Activated CD4-positive, alpha-beta memory T cell treated with anti-CD3 and anti-CD28 coated beads for 36 hours (primary cell): ENCODE measurements at regions of chr2 and their contacts with region 1.

Region 1: DNA sequence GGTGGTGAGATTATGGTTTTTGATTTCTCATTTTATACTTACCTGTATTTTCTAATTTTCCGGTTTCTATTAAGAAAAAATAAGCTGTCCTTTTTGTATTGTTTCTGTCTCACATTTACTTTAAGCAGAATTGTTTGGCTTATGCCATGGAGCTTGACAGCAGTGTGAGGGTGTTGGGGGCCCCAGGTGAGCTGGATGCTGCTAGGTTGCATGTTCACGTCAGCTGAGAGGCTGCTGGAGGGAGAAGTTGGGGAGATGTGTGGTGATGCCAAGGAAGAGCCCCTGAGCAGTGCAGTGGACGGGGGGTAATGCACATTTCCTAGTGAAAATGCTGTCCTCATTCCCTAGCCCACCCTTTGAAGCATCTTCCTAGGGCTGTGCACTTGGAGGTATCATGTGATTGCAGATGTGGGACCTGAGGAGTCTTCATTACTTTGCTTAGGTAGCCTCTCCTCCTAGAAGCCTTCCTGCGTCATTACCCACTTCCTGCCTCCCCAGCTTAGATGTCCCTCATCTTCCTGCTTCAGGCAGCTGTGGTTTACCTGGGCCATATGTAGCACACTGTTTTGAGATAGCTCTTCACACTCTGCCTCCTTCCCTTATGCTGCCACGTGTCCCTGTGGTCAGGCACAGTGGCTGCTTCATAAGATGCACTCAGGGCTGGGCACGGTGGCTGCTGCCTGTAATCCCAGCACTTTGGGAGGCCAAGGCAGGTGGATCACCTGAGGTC is 16.2 kb downstream of the ATG16L1 start:
- DNase-seq: peak; percentile 88
- H3K4me3 Mint-ChIP-seq: peak overlapping the region; percentile 66
- H3K27ac Mint-ChIP-seq: peak overlapping the region; percentile 94
- H3K4me1 Mint-ChIP-seq: peaks cover 63% of the 10 kb centered on the region
- H3K27me3 Mint-ChIP-seq: no peaks in the 10 kb centered on the region

Region 2: GRCh38 chr2:232611551-232612218 is 656.0 kb before region 1 on chr2:
- CTCF ChIA-PET with region 1: no interaction called
- POLR2A ChIA-PET with region 1: no interaction called
- intact Hi-C with region 1: loop called (anchors 1 kb)
- DNase-seq: peak; percentile 79
- H3K4me3 Mint-ChIP-seq: no peak overlapping the region
- H3K27ac Mint-ChIP-seq: no peak overlapping the region
- H3K4me1 Mint-ChIP-seq: no peaks in the 10 kb centered on the region
- H3K27me3 Mint-ChIP-seq: no peaks in the 10 kb centered on the region

Region 3: DNA sequence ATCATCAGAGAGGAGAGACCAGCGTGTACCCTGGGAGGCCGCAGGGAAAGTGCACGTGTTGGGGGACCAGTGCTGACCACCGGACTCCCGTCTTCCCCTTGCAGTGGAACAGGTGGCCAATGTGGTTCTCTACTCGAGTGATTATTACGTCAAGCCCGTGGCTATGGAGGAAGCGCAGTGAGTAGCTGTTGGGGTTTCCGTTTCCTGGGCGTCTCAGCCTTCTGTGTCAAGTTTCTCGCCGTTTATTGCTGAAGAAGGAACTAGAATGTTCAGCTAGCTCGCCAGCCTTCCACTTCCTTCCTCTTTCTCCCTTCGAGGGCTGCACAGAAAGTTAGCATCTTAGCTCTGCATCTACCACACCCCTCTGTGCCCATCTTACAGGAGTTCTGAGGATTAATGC is 63.9 kb after region 1 on chr2:
- CTCF ChIA-PET with region 1: no interaction called
- POLR2A ChIA-PET with region 1: no interaction called
- intact Hi-C with region 1: loop called (anchors 5 kb)
- DNase-seq: peak; percentile 81
- H3K4me3 Mint-ChIP-seq: peak overlapping the region; percentile 1
- H3K27ac Mint-ChIP-seq: peak overlapping the region; percentile 88
- H3K4me1 Mint-ChIP-seq: peaks cover 31% of the 10 kb centered on the region
- H3K27me3 Mint-ChIP-seq: no peaks in the 10 kb centered on the region

Region 4: GRCh38 chr2:233418761-233419625 is 151.3 kb after region 1 on chr2:
- CTCF ChIA-PET with region 1: no interaction called
- POLR2A ChIA-PET with region 1: no interaction called
- intact Hi-C with region 1: loop called (anchors 5 kb)
- DNase-seq: peak; percentile 72
- H3K4me3 Mint-ChIP-seq: peak overlapping the region; percentile 63
- H3K27ac Mint-ChIP-seq: peak overlapping the region; percentile 85
- H3K4me1 Mint-ChIP-seq: peaks cover 92% of the 10 kb centered on the region
- H3K27me3 Mint-ChIP-seq: no peaks in the 10 kb centered on the region

Region 5: DNA sequence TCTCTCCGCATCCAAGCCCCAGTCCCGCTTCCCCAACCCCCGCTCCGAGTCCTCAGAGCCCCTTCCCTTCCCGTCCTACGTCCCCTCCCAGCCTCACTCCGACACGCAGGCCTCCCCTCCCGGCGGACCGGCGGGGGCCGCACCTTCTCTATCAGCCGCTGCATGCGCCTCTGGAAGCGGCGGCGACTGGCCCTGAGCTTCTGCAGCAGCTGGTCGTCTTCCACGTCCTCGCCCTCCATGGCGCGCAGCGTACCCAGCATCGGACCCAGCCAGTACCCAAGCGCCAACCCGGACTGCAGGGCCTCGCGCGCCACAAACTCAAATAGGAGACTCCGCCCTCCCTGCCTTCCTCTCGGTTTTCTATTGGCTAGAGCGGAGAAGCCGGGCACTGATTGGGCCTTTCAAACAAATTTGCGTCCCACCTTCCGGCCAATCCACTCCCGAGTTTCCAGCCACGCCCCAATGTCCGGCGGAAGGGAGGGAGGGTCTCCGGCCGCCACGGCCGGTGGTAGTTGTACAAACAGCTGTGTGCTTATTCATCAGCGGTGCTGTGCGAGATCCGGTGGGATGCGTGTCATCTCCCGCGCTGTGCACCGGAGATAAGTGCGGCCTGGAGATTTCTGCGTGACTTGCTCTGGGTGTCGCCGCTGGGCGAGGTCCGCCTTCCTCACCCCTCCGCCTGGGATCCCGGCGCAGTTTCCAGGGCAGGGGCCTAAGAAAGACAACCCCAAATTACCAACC is 586.7 kb after region 1 on chr2 and contains the start of gene HJURP:
- CTCF ChIA-PET with region 1: no interaction called
- POLR2A ChIA-PET with region 1: no interaction called
- intact Hi-C with region 1: loop called (anchors 10 kb)
- DNase-seq: peak; percentile 97
- H3K4me3 Mint-ChIP-seq: peak within 1 kb of the TSS; percentile 92
- H3K27ac Mint-ChIP-seq: peak within 1 kb of the TSS; percentile 94
- H3K4me1 Mint-ChIP-seq: peaks cover 19% of the 10 kb centered on the region
- H3K27me3 Mint-ChIP-seq: peaks cover 1% of the 10 kb centered on the region
- total RNA-seq, gene HJURP: 98.4 to 102 TPM